Ascending aorta (tissue), 2 donors: ENCODE measurements at regions of chr6 and their contacts with region 1.

Region 1: DNA sequence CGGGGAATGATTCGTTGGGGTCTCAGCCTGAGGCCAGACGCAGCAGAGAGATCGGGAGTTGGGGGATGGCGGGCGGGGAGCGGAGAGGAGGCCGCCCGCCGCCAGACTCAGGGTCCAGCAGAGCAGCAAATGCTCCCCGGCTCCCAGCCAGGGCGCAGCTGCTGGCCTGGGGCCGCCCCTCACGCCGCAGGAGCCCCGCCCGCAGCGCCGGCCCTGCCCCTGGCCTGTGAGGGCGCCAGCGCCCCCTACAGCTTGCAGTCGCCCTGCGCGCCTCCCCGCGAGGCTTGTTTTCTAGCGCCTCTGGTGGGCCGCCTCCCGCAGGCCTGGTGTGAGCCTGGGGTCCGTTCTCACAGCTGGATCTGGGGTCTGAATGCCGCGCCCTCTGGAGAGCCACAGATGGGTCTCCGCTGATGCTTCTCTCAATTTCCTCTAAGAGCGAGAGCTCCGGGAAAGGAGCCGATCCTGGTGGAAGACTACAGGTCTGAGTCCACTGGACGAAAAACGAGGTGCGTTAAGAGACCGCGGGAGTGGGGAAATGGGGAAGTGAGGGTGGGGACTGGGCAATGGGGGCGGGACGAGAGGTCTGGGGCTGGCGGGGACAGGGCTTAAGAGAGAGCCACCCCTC is 29.9 kb downstream of the TRIM38 start:
- DNase-seq: peak; percentile 78 to 98
- H3K4me3 ChIP-seq: peak overlapping the region; percentile 61 to 72
- H3K27ac ChIP-seq: peak overlapping the region; percentile 91 to 93
- H3K4me1 ChIP-seq: peaks cover 0 to 8% of the 10 kb centered on the region in 2 donors
- H3K27me3 ChIP-seq: no peaks in the 10 kb centered on the region
- CTCF ChIP-seq: peak; percentile 95 to 100 (median 98)

Region 2: GRCh38 chr6:25962149-25963127 is 30.1 kb before region 1 on chr6 and contains the start of gene TRIM38:
- intact Hi-C with region 1: loop called (anchors 1 kb)
- DNase-seq: peak; percentile 55 to 93
- H3K4me3 ChIP-seq: peak within 1 kb of the TSS; percentile 56 to 94
- H3K27ac ChIP-seq: peak within 1 kb of the TSS; percentile 94 to 98
- H3K4me1 ChIP-seq: peaks cover 9 to 29% of the 10 kb centered on the region in 2 donors
- H3K27me3 ChIP-seq: no peaks in the 10 kb centered on the region
- CTCF ChIP-seq: no peak
- total RNA-seq, gene TRIM38: 7.6 TPM

Region 3: DNA sequence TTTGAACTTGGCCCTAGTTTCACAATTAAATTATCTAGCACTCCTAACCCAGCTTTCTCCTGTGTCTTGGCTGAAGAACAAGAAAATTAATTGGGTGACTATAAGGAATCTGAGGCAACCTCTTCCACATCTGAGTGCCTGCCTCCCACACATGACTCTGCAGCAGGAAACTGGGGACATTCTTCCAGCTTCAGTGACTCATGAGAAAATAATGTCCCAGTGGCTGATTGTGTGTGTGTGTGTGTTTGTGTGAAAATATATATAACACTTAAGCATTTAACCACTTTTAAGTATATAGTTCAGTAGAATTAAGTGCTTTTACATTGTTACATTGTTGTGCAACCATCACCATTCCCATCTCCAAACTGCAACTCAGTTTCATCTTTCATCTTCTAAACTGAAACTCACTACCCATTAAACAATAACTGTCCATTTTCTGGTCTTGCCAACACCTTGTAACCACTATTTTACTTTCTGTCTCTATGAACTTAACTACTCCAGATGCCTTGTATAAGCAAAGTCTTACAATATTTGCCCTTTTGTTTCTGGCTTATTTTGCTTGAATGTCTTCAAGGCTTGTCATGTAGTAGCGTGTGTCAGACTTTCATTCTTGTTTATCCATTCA is 21.2 kb before region 1 on chr6:
- intact Hi-C with region 1: loop called (anchors 1 kb)
- DNase-seq: peak in 1 of 2 donors; percentile 81
- H3K4me3 ChIP-seq: peak overlapping the region in 1 of 2 donors; percentile 26
- H3K27ac ChIP-seq: peak overlapping the region; percentile 68 to 77
- H3K4me1 ChIP-seq: peaks cover 20 to 35% of the 10 kb centered on the region in 2 donors
- H3K27me3 ChIP-seq: no peaks in the 10 kb centered on the region
- CTCF ChIP-seq: no peak

Region 4: DNA sequence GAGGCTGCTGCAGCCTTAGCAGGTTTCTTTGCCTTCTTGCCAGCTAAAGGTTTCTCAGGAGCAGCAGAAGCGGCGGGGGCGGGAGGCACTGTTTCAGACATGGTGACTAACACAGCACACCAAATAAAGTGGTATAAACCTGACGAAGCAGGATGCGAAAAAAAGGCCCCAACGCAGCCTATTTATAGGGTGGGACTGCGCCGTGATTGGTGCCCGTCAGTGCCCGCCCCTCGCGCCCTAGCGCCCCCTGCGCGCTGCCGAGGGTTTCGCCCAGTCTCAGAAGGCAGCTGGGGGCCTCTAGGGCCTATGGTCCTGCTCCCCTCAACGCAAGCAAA is 25.1 kb after region 1 on chr6:
- intact Hi-C with region 1: loop called (anchors 1 kb)
- DNase-seq: peak; percentile 75 to 94
- H3K4me3 ChIP-seq: peak overlapping the region; percentile 36 to 73
- H3K27ac ChIP-seq: peak overlapping the region; percentile 80 to 86
- H3K4me1 ChIP-seq: peaks cover 0 to 3% of the 10 kb centered on the region in 2 donors
- H3K27me3 ChIP-seq: no peaks in the 10 kb centered on the region
- CTCF ChIP-seq: peak; percentile 13 to 54 (median 54)